Uterus (tissue), 4 donors: ENCODE measurements at regions of chr20 and their contacts with region 1.

Region 1: GRCh38 chr20:19995220-19995863 is 21.8 kb upstream of the NAA20 start:
- DNase-seq: peak in 1 of 2 donors; percentile 55
- H3K4me3 ChIP-seq: no peak overlapping the region
- H3K27ac ChIP-seq: peak overlapping the region; percentile 67
- H3K4me1 ChIP-seq: peaks cover 6 to 13% of the 10 kb centered on the region in 2 donors
- H3K27me3 ChIP-seq: no peaks in the 10 kb centered on the region
- CTCF ChIP-seq: peak; percentile 76 to 83 (median 78)
- POLR2A ChIP-seq: no peak

Region 2: GRCh38 chr20:19566226-19566965 is 428.9 kb before region 1 on chr20:
- intact Hi-C with region 1: no loop called
- DNase-seq: no peak
- H3K4me3 ChIP-seq: no peak overlapping the region
- H3K27ac ChIP-seq: no peak overlapping the region
- H3K4me1 ChIP-seq: no peaks in the 10 kb centered on the region
- H3K27me3 ChIP-seq: no peaks in the 10 kb centered on the region
- CTCF ChIP-seq: no peak
- POLR2A ChIP-seq: no peak

Region 3: DNA sequence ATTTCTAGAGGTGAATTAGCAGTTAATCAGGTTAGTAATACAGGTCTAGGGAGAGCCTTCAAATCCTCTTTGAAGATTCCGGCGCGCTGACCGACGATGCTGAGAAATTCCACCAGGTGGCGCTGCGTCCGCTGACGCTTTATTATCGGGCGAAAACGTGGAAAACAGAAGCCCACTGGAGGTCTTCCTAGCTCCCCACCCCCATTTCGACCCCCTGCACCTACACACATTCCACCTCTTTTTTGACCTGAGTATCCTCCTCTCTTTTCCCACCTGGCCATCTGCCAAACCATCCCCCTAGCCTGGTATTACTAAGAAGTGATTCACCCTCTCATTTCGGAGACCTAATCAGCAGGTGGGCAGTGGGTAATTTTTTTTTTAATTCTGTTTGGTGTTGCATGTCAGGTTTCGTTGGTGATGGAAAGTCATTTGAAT is 302.6 kb before region 1 on chr20:
- intact Hi-C with region 1: loop called (anchors 10 kb)
- DNase-seq: peak; percentile 55 to 57
- H3K4me3 ChIP-seq: no peak overlapping the region
- H3K27ac ChIP-seq: no peak overlapping the region
- H3K4me1 ChIP-seq: no peaks in the 10 kb centered on the region
- H3K27me3 ChIP-seq: no peaks in the 10 kb centered on the region
- CTCF ChIP-seq: peak; percentile 79 to 92 (median 86)
- POLR2A ChIP-seq: no peak

Region 4: GRCh38 chr20:19784511-19785172 is 210.7 kb before region 1 on chr20:
- intact Hi-C with region 1: loop called (anchors 5 kb)
- DNase-seq: peak; percentile 35 to 68
- H3K4me3 ChIP-seq: no peak overlapping the region
- H3K27ac ChIP-seq: peak overlapping the region; percentile 65 to 79
- H3K4me1 ChIP-seq: peaks cover 9 to 14% of the 10 kb centered on the region in 2 donors
- H3K27me3 ChIP-seq: no peaks in the 10 kb centered on the region
- CTCF ChIP-seq: peak; percentile 72 to 83 (median 78)
- POLR2A ChIP-seq: no peak

Region 5: GRCh38 chr20:19815553-19815991 is 179.8 kb before region 1 on chr20:
- intact Hi-C with region 1: loop called (anchors 10 kb)
- DNase-seq: peak in 1 of 2 donors; percentile 52
- H3K4me3 ChIP-seq: no peak overlapping the region
- H3K27ac ChIP-seq: peak overlapping the region; percentile 44 to 80
- H3K4me1 ChIP-seq: peaks cover 6 to 18% of the 10 kb centered on the region in 2 donors
- H3K27me3 ChIP-seq: no peaks in the 10 kb centered on the region
- CTCF ChIP-seq: peak in 1 of 4 experiments; percentile 21
- POLR2A ChIP-seq: no peak